IMR-90 (cell line): ENCODE measurements at regions of chr5 and their contacts with region 1.

Region 1: GRCh38 chr5:173057062-173057924 is 1.1 kb downstream of the CREBRF start:
- DNase-seq: peak; percentile 97
- ATAC-seq: peak; percentile 87
- H3K4me3 ChIP-seq: peak overlapping the region; percentile 97
- H3K27ac ChIP-seq: peak overlapping the region; percentile 90
- H3K4me1 ChIP-seq: no peaks in the 10 kb centered on the region; the same call in 1 of the 2 replicates
- H3K27me3 ChIP-seq: no peaks in the 10 kb centered on the region
- CTCF ChIP-seq: 0 out of 2 replicates have a peak, but pooled peaks have one; percentile 14
- POLR2A ChIP-seq: peak; percentile 38; the same call in 1 of the 2 replicates
- RAD21 ChIP-seq: no peak

Region 2: GRCh38 chr5:172984243-172984953 is 72.9 kb before region 1 on chr5:
- CTCF ChIA-PET with region 1: interaction called, 3 read pairs
- POLR2A ChIA-PET with region 1: interaction called, 3 read pairs
- dilution Hi-C with region 1: no loop called
- in situ Hi-C with region 1: no loop called
- intact Hi-C with region 1: loop called (anchors 1 kb)
- DNase-seq: peak; percentile 92
- ATAC-seq: peak; percentile 65
- H3K4me3 ChIP-seq: peak overlapping the region; percentile 86
- H3K27ac ChIP-seq: peak overlapping the region; percentile 92
- H3K4me1 ChIP-seq: peaks cover 2% of the 10 kb centered on the region; the same call in 1 of the 2 replicates
- H3K27me3 ChIP-seq: no peaks in the 10 kb centered on the region
- CTCF ChIP-seq: peak; percentile 66
- POLR2A ChIP-seq: peak; percentile 58; the same call in 1 of the 2 replicates
- RAD21 ChIP-seq: peak; percentile 79

Region 3: DNA sequence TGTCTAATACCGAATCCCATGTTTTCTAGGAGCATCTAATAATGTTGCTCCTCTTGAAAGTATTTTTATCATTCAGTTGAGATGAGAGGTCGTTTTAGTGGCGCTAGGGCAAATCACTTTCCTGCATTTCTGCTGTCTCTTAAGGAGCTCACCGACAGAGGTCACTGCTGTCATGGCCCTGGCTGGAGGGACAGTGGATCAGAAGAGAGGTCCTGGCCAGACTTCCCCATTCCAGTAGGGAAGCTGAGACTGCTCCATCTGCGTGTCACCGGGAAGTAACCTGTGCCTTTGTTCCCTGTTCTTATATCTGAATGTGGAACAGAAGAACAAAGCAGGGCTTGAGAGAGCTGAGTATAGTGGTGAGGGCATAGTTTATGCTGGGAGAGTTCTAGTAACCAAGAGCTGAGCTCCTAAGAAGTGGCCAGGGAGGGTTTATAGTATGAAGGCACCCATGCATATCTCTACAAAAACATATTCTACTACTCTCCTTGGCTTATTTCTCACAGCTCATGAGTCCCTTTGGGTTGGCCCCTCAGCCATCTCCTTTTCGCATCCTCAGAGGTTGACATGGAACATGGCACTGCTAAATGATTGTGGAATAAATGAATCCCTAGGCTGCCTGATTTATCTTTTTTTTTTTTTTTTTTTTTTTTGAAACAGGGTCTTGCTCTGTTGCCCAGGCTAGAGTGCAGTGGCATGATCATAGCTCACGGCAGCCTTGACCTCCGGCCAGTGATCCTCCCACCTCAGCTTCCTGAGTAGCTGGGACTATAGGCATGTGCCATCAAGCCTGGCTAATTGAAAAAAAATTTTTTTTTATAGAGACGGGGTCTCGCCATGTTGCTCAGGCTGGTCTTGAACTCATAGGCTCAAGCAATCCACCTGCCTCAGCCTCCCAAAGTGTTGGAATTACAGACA is 46.5 kb before region 1 on chr5:
- CTCF ChIA-PET with region 1: interaction called, 3 read pairs
- POLR2A ChIA-PET with region 1: no interaction called
- dilution Hi-C with region 1: no loop called
- in situ Hi-C with region 1: no loop called
- intact Hi-C with region 1: loop called (anchors 2 kb)
- DNase-seq: peak; percentile 32
- ATAC-seq: peak; percentile 72
- H3K4me3 ChIP-seq: no peak overlapping the region
- H3K27ac ChIP-seq: peak overlapping the region; percentile 24; the same call in 1 of the 2 replicates
- H3K4me1 ChIP-seq: peaks cover 17% of the 10 kb centered on the region
- H3K27me3 ChIP-seq: no peaks in the 10 kb centered on the region
- CTCF ChIP-seq: peak; percentile 34; the same call in 1 of the 2 replicates
- POLR2A ChIP-seq: no peak
- RAD21 ChIP-seq: peak; percentile 50

Region 4: GRCh38 chr5:173094012-173094661 is 36.8 kb after region 1 on chr5:
- CTCF ChIA-PET with region 1: no interaction called
- POLR2A ChIA-PET with region 1: no interaction called
- dilution Hi-C with region 1: no loop called
- in situ Hi-C with region 1: no loop called
- intact Hi-C with region 1: loop called (anchors 1 kb)
- DNase-seq: peak; percentile 94
- ATAC-seq: peak; percentile 90
- H3K4me3 ChIP-seq: no peak overlapping the region
- H3K27ac ChIP-seq: peak overlapping the region; percentile 69; the same call in 1 of the 2 replicates
- H3K4me1 ChIP-seq: peaks cover 9% of the 10 kb centered on the region
- H3K27me3 ChIP-seq: no peaks in the 10 kb centered on the region
- CTCF ChIP-seq: no peak
- POLR2A ChIP-seq: no peak
- RAD21 ChIP-seq: no peak